ENCODE measurements at regions of chr3 and their contacts with region 1.

Region 1: GRCh38 chr3:38214560-38214959 is 49.2 kb downstream of the OXSR1 start:
- DNase-seq: no peak
- ATAC-seq: no peak
- H3K4me3 ChIP-seq: no peak overlapping the region
- H3K4me3 Mint-ChIP-seq: no peak overlapping the region
- H3K27ac ChIP-seq: no peak overlapping the region
- H3K27ac Mint-ChIP-seq: no peak overlapping the region
- H3K4me1 ChIP-seq: peaks cover 2 to 3% of the 10 kb centered on the region in 2 experiments
- H3K4me1 Mint-ChIP-seq: peaks cover 45 to 51% (median 46%) of the 10 kb centered on the region in 3 donors
- H3K27me3 ChIP-seq: no peaks in the 10 kb centered on the region
- H3K27me3 Mint-ChIP-seq: no peaks in the 10 kb centered on the region

Region 2: DNA sequence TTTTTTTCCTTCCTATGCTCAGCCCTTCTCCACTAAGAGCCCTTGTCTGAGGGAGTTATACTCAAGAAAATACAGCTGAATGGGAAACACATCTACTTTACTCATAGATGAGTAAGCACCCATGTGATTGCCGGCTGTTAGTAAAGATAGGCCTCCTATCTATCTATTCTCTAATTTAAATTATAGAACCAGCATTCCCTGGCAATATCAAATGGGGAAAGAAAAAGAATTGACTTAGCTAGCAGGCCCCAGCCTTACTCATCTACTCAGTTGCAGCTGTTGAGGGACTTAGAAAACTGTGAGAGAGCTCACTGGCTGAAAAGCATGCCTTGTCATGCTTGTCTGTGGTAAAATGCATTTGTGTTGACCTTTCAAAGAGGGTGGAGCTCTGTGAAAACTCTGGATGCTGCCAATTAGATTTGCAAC is 923.3 kb before region 1 on chr3:
- CTCF ChIA-PET with region 1: no interaction called
- POLR2A ChIA-PET with region 1: interaction called in 1 of 2 experiments, 10 read pairs
- DNase-seq: no peak
- ATAC-seq: no peak
- H3K4me3 ChIP-seq: no peak overlapping the region
- H3K4me3 Mint-ChIP-seq: no peak overlapping the region
- H3K27ac ChIP-seq: no peak overlapping the region
- H3K27ac Mint-ChIP-seq: no peak overlapping the region
- H3K4me1 ChIP-seq: no peaks in the 10 kb centered on the region
- H3K4me1 Mint-ChIP-seq: peaks cover 0 to 23% (median 12%) of the 10 kb centered on the region in 3 donors
- H3K27me3 ChIP-seq: no peaks in the 10 kb centered on the region
- H3K27me3 Mint-ChIP-seq: no peaks in the 10 kb centered on the region